ENCODE measurements at regions of chr1 and their contacts with region 1.

Region 1: GRCh38 chr1:183039985-183040447 is 16.8 kb downstream of the LAMC1 start:
- DNase-seq: no peak
- ATAC-seq: no peak
- H3K4me3 ChIP-seq: no peak overlapping the region
- H3K27ac ChIP-seq: no peak overlapping the region
- H3K4me1 ChIP-seq: peaks cover 0 to 20% of the 10 kb centered on the region in 2 experiments; a peak in 2 of 4 replicates
- H3K27me3 ChIP-seq: no peaks in the 10 kb centered on the region
- CTCF ChIP-seq: no peak
- POLR2A ChIP-seq: no peak
- RAD21 ChIP-seq: no peak

Region 2: DNA sequence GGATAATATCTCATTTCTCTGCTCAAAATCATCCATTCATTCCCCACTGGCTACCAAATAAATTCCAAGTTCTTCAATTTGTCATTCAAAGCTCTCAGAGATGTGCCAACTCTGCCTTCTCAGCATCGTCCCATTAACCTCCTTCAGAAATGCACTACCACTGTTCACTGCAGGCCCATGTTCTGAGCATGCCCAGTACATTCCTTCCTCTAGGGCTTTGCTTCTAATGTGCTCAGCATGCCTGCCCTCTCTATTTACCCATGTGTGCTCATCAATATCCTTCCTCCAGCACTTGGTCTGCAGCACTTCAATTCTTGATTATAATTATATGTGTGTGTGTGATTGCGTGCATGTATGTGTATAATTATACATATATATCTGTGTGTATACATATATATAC is 319.6 kb before region 1 on chr1:
- CTCF ChIA-PET with region 1: no interaction called
- POLR2A ChIA-PET with region 1: no interaction called
- RAD21 ChIA-PET with region 1: no interaction called
- intact Hi-C with region 1: no loop called
- DNase-seq: peak; percentile 19
- ATAC-seq: peak; percentile 92
- H3K4me3 ChIP-seq: no peak overlapping the region
- H3K27ac ChIP-seq: no peak overlapping the region
- H3K4me1 ChIP-seq: no peaks in the 10 kb centered on the region
- H3K27me3 ChIP-seq: no peaks in the 10 kb centered on the region
- CTCF ChIP-seq: peak in 2 of 3 experiments; percentile 47 to 59; a peak in 4 of 6 replicates
- POLR2A ChIP-seq: no peak
- RAD21 ChIP-seq: no peak

Region 3: DNA sequence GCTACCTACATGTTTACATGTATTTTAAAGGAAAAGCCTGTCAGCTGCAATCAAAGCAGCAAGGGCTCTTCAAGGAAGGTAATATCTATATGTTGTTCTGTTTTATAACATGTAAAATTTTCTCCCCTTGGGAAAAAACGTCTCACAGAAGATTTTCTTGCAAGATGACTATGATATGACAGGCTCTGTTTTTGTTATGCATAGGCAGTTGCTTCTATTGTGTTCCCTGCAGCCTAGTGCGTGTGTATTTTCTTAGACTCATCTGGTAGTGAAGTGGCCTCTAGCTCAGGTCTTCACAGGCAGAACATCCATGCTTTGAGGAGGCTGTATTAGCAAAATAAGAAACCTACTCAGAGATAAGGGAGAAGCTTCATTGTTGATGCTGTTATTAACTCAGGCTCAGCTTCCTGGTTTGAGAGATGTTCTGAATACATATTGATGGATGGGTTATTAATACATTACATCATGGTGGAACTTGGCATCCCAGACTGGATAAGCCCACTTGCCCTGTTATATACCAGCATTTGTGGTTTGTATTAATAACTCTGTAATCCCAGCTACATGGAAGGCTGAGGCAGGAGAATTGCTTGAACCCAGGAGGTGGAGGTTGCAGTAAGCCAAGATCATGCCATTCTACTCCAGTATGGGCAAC is 19.0 kb after region 1 on chr1:
- CTCF ChIA-PET with region 1: no interaction called
- POLR2A ChIA-PET with region 1: no interaction called
- RAD21 ChIA-PET with region 1: no interaction called
- intact Hi-C with region 1: loop called (anchors 2 kb)
- DNase-seq: no peak
- ATAC-seq: no peak
- H3K4me3 ChIP-seq: no peak overlapping the region
- H3K27ac ChIP-seq: no peak overlapping the region
- H3K4me1 ChIP-seq: peaks cover 15 to 46% of the 10 kb centered on the region in 2 experiments
- H3K27me3 ChIP-seq: no peaks in the 10 kb centered on the region
- CTCF ChIP-seq: no peak
- POLR2A ChIP-seq: no peak
- RAD21 ChIP-seq: no peak

Region 4: GRCh38 chr1:183090391-183091006 is 50.5 kb after region 1 on chr1:
- CTCF ChIA-PET with region 1: no interaction called
- POLR2A ChIA-PET with region 1: no interaction called
- RAD21 ChIA-PET with region 1: no interaction called
- intact Hi-C with region 1: no loop called
- DNase-seq: no peak
- ATAC-seq: no peak
- H3K4me3 ChIP-seq: no peak overlapping the region
- H3K27ac ChIP-seq: no peak overlapping the region
- H3K4me1 ChIP-seq: peaks cover 31 to 58% of the 10 kb centered on the region in 2 experiments
- H3K27me3 ChIP-seq: no peaks in the 10 kb centered on the region
- CTCF ChIP-seq: no peak
- POLR2A ChIP-seq: no peak
- RAD21 ChIP-seq: no peak

Region 5: DNA sequence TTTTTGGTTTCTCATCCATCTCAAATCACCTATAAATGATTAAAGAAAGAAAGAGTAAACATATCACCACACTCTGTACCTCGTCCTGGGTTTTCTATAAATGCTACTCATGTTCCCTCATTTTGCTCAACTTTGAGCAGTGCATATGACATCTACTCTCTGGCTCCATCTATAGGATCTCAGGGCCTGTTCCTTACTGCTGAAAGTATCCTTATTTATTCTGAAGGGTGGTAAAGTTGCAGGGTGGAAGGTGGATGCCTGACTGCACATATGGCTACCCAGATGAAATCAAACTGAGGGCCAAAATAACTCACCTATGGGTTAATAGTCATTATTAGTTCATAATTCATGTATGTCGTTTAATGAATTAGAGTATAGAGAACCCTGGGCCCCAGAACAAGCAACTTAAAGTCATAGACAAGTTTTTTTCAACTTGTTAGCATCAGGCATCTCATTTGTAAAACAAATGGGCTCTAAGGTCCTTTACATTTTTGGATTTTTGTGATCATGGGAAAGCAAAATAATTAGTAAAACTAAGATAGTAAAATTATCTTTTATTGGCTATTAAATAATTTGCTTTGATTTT is 503.7 kb after region 1 on chr1:
- CTCF ChIA-PET with region 1: no interaction called
- POLR2A ChIA-PET with region 1: no interaction called
- RAD21 ChIA-PET with region 1: no interaction called
- intact Hi-C with region 1: no loop called
- DNase-seq: peak; percentile 23
- ATAC-seq: peak; percentile 98
- H3K4me3 ChIP-seq: no peak overlapping the region
- H3K27ac ChIP-seq: no peak overlapping the region
- H3K4me1 ChIP-seq: peaks cover 0 to 3% of the 10 kb centered on the region in 2 experiments; a peak in 1 of 4 replicates
- H3K27me3 ChIP-seq: no peaks in the 10 kb centered on the region
- CTCF ChIP-seq: peak; percentile 47 to 74 (median 64); a peak in 5 of 6 replicates
- POLR2A ChIP-seq: no peak
- RAD21 ChIP-seq: peak; percentile 62

Measured in HCT116 (cell line).